ENCODE measurements at regions of chr12 and their contacts with region 1.

Region 1: GRCh38 chr12:45268672-45269411 is 52.9 kb downstream of the ANO6 start:
- H3K4me3 ChIP-seq: peak overlapping the region; percentile 17
- H3K27ac ChIP-seq: peak overlapping the region; percentile 56
- H3K4me1 ChIP-seq: peaks cover 16% of the 10 kb centered on the region
- CTCF ChIP-seq: peak; percentile 42; the same call in 1 of the 2 replicates

Region 2: GRCh38 chr12:45215419-45216229 is 53.2 kb before region 1 on chr12 and contains the start of gene ANO6:
- CTCF ChIA-PET with region 1: interaction called, 10 read pairs
- POLR2A ChIA-PET with region 1: interaction called, 16 read pairs
- H3K4me3 ChIP-seq: peak within 1 kb of the TSS; percentile 78
- H3K27ac ChIP-seq: peak within 1 kb of the TSS; percentile 98
- H3K4me1 ChIP-seq: 0 out of 2 replicates have a peak, but pooled peaks cover 2% of the 10 kb centered on the region
- CTCF ChIP-seq: peak; percentile 68

Region 3: DNA sequence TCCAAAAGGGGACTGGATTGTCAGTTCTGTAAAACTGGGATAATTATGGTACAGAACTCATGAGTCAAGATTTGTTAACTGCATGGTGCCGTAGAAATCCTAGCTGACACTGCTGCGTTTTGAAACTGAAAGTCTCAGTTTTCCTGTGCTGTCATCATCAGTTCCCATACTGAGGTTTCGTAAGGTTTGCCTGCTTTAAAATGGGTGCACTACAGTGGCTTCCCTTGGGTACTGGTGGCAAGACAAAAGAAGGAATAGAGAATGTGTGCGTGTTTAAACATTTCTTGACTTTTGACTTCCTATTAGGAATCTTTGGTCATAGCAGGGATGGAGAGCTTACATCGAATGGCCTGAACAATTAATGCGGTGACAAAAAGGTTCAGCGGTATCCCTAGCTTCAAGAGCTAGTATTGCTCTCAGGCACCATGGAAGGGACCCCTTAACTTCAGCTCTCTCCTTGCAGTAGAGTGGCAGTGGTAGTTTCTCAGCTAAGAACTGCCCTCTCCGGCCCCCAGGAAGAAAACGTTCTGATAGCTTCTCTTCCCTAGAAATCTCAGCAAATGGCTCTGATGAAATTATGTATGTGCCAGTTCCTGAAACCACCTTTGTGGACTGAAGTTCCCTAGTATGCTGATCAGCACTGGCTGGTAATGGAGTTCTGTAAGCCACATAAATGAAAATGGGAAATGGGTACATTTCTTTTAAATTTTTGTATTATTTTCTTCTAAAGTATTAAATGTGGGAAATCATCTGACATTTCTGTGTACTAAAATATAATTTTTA is 24.1 kb before region 1 on chr12:
- CTCF ChIA-PET with region 1: no interaction called
- POLR2A ChIA-PET with region 1: no interaction called
- H3K4me3 ChIP-seq: no peak overlapping the region
- H3K27ac ChIP-seq: no peak overlapping the region
- H3K4me1 ChIP-seq: no peaks in the 10 kb centered on the region
- CTCF ChIP-seq: no peak

Region 4: GRCh38 chr12:45298716-45299692 is 30.2 kb after region 1 on chr12:
- CTCF ChIA-PET with region 1: no interaction called
- POLR2A ChIA-PET with region 1: no interaction called
- H3K4me3 ChIP-seq: no peak overlapping the region
- H3K27ac ChIP-seq: no peak overlapping the region
- H3K4me1 ChIP-seq: peaks cover 28% of the 10 kb centered on the region
- CTCF ChIP-seq: no peak

Measured in HEK293 (cell line).